Activated CD4-positive, alpha-beta memory T cell treated with anti-CD3 and anti-CD28 coated beads for 36 hours (primary cell): ENCODE measurements at regions of chr2 and their contacts with region 1.

Region 1: DNA sequence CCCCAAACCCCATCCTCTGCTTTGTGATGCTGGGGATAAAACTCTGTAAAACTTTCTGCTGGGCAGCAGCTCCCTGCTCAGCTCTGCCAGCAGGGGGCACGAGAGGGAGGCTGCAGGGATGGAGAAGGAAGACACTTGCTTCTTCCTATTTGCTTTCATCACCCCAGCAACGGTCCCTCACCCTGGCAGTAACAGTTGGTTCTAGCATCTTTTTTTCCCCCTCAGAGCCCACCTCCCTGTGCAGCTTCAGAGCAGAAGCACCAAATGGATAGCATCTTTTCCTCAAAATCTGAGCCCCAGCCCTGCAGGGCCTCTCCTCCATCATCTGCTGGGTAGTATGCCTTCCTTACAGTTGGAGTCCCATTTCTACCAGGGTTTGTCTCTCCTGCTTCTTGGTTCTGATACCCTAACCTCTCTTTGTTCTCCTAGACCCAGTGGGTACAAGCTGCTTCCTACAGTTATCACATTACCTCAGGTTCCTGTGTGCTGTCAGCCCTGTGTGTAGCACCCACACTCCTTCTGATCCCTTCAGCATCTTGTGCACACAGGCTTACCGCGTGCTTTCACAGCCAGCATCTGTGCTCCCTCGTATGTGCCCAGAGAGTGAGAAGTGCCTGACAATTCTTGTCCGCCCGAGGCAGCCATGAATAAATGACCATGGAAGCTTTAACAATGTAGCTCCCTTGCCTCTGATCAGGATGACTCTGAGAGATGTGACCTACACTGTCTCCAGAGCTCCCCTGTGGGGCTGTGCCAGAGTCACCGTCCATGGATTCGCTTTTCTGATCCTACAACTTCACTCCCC is 14.5 kb downstream of the CKAP2L start:
- DNase-seq: peak; percentile 90
- H3K4me3 Mint-ChIP-seq: peak overlapping the region; percentile 12
- H3K27ac Mint-ChIP-seq: peak overlapping the region; percentile 44
- H3K4me1 Mint-ChIP-seq: peaks cover 21% of the 10 kb centered on the region
- H3K27me3 Mint-ChIP-seq: no peaks in the 10 kb centered on the region

Region 2: GRCh38 chr2:112683538-112684414 is 66.2 kb before region 1 on chr2:
- CTCF ChIA-PET with region 1: no interaction called
- POLR2A ChIA-PET with region 1: no interaction called
- intact Hi-C with region 1: no loop called
- DNase-seq: no peak
- H3K4me3 Mint-ChIP-seq: no peak overlapping the region
- H3K27ac Mint-ChIP-seq: no peak overlapping the region
- H3K4me1 Mint-ChIP-seq: peaks cover 7% of the 10 kb centered on the region
- H3K27me3 Mint-ChIP-seq: no peaks in the 10 kb centered on the region

Region 3: DNA sequence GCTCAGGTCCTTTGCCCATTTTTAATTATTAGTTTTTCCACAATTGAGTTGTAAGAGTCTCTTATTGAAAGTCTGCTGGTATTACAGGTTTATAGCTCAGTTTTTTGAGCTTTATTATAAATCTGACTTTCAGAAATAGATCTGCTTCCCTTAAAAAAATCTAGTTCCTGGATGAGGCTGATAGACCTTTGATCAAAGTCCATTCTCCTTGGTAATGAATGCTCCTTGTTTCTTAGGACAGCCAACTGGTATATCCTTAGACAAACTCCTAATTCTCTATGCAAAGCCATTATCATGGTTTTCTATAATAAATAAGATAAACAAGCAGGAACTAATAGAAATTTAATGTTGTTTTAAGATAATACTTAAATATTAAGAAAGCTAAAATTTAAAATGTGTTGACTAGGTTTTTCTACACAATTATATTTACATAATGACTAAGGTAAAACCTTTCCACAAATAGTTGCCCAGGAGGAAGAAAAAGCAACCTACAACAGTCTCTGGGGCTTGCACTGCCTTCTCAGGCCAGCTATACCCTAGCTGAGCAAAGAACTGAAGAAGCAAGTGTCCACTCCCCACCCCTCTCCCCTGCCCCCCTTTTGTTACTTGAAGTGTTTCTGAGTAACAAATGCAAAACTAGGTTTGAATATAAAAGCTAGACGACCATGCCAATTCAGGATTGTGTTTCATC is 12.3 kb before region 1 on chr2:
- CTCF ChIA-PET with region 1: interaction called, 19 read pairs
- POLR2A ChIA-PET with region 1: no interaction called
- intact Hi-C with region 1: no loop called
- DNase-seq: no peak
- H3K4me3 Mint-ChIP-seq: no peak overlapping the region
- H3K27ac Mint-ChIP-seq: no peak overlapping the region
- H3K4me1 Mint-ChIP-seq: peaks cover 7% of the 10 kb centered on the region
- H3K27me3 Mint-ChIP-seq: no peaks in the 10 kb centered on the region

Region 4: GRCh38 chr2:112772322-112772721 is 22.4 kb after region 1 on chr2:
- CTCF ChIA-PET with region 1: interaction called, 10 read pairs
- POLR2A ChIA-PET with region 1: no interaction called
- intact Hi-C with region 1: no loop called
- DNase-seq: no peak
- H3K4me3 Mint-ChIP-seq: no peak overlapping the region
- H3K27ac Mint-ChIP-seq: no peak overlapping the region
- H3K4me1 Mint-ChIP-seq: peaks cover 21% of the 10 kb centered on the region
- H3K27me3 Mint-ChIP-seq: no peaks in the 10 kb centered on the region

Region 5: GRCh38 chr2:112893757-112894156 is 143.8 kb after region 1 on chr2:
- CTCF ChIA-PET with region 1: interaction called, 11 read pairs
- POLR2A ChIA-PET with region 1: interaction called, 3 read pairs
- intact Hi-C with region 1: no loop called
- DNase-seq: no peak
- H3K4me3 Mint-ChIP-seq: no peak overlapping the region
- H3K27ac Mint-ChIP-seq: no peak overlapping the region
- H3K4me1 Mint-ChIP-seq: no peaks in the 10 kb centered on the region
- H3K27me3 Mint-ChIP-seq: peaks cover 9% of the 10 kb centered on the region

Region 6: DNA sequence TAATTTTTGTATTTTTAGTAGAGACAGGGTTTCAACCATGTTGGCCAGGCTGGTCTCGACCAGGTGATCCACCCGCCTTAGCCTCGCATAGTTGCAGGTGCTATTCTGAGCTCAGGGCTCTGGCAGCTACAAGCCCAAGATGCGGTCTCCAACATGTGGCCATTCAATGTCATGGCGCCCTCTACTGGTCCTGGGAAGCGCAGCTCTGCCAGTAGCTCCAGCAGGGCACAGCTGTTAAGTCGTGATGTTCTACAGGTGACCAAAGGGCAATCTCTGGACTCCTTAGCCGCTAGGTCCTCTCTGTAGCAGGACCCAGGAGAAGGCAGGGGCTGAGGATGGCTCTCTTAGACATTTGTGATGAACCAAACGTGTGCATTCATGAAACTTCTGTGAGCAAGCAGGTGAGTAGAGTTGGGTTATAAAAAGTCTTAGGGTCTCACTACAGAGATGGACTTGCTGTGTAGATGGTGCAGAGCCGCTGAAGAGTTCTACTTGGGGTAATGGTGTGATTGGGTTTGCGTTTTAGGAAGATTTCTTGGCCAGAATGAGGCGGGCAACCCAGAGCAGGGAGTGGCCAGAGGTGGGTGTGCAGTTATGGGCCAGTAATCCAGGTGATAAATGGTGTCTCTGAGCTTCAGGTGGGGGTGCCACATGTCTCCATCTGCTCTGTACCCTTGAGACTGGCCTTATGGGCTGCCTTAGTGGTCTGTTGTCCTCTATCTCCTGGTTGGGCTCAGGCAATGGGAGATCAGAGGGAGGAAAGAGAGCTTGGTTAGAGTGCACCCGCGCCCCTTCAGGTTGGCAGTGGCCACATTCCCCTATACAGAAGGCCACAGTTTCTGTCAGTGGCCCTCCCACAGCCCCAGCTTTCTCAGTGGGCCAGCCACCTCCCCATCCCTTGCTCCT is 192.0 kb after region 1 on chr2:
- CTCF ChIA-PET with region 1: interaction called, 178 read pairs
- POLR2A ChIA-PET with region 1: interaction called, 4 read pairs
- intact Hi-C with region 1: loop called (anchors 1 kb)
- DNase-seq: peak; percentile 85
- H3K4me3 Mint-ChIP-seq: no peak overlapping the region
- H3K27ac Mint-ChIP-seq: no peak overlapping the region
- H3K4me1 Mint-ChIP-seq: no peaks in the 10 kb centered on the region
- H3K27me3 Mint-ChIP-seq: no peaks in the 10 kb centered on the region